MCF 10A (cell line): ENCODE measurements at regions of chrX and their contacts with region 1.

Region 1: GRCh38 chrX:131704136-131704695 is 160.3 kb downstream of the OR13H1 start:
- DNase-seq: peak; percentile 96
- H3K4me3 Mint-ChIP-seq: peak overlapping the region; percentile 77
- H3K27ac Mint-ChIP-seq: peak overlapping the region; percentile 20
- H3K4me1 Mint-ChIP-seq: no peaks in the 10 kb centered on the region
- H3K27me3 Mint-ChIP-seq: no peaks in the 10 kb centered on the region
- CTCF ChIP-seq: peak; percentile 87

Region 2: DNA sequence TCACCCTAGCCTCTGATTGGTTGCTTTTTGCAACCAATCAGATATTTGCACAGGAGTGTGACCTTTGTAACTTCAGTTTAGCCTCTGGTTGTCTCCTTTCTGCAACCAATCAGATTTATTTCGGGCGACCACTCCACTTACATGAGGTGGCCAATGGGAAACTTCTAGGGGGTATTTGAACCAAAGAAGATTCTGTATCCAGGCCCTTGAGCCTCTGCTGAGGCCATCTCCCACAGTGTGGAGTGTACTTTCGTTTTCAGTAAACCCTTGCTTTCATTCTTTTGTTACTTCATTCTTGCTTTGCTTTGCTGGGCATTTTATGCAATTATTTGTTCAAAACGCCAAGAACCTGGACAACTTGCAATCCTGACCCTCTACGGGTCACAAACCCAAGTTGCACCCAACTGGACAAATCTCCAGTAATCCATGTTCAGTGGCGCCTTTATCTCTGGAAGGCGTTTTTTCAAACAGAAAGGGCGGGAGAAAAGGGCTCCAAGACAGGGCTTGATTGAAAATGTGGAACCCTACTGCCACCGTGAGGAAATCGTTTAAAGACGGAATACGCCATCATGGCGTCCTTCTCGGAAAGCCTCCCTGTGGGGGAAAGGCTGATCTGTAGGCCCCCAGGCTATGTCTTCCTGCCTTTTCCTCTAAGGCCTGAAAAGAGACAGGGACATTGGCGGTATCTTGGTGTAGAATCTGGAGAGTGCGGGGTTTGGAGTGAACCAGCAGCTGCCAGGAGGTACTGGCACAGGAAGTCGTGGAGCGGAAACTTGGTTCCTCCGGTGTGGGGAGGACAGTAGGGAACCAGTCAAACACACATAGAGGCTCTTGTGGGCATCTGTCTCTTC is 24.3 kb after region 1 on chrX:
- CTCF ChIA-PET with region 1: interaction called, 3 read pairs
- POLR2A ChIA-PET with region 1: no interaction called
- intact Hi-C with region 1: loop called (anchors 1 kb)
- DNase-seq: peak; percentile 93
- H3K4me3 Mint-ChIP-seq: peak overlapping the region; percentile 85
- H3K27ac Mint-ChIP-seq: peak overlapping the region; percentile 98
- H3K4me1 Mint-ChIP-seq: no peaks in the 10 kb centered on the region
- H3K27me3 Mint-ChIP-seq: no peaks in the 10 kb centered on the region
- CTCF ChIP-seq: peak; percentile 52

Region 3: GRCh38 chrX:131746474-131746968 is 42.3 kb after region 1 on chrX:
- CTCF ChIA-PET with region 1: interaction called, 22 read pairs
- POLR2A ChIA-PET with region 1: interaction called, 16 read pairs
- intact Hi-C with region 1: no loop called
- DNase-seq: peak; percentile 95
- H3K4me3 Mint-ChIP-seq: peak overlapping the region; percentile 93
- H3K27ac Mint-ChIP-seq: peak overlapping the region; percentile 94
- H3K4me1 Mint-ChIP-seq: peaks cover 13% of the 10 kb centered on the region
- H3K27me3 Mint-ChIP-seq: no peaks in the 10 kb centered on the region
- CTCF ChIP-seq: peak; percentile 62

Region 4: GRCh38 chrX:131783555-131784308 is 79.5 kb after region 1 on chrX:
- CTCF ChIA-PET with region 1: interaction called, 6 read pairs
- POLR2A ChIA-PET with region 1: interaction called, 5 read pairs
- intact Hi-C with region 1: loop called (anchors 2 kb)
- DNase-seq: peak; percentile 94
- H3K4me3 Mint-ChIP-seq: peak overlapping the region; percentile 69
- H3K27ac Mint-ChIP-seq: peak overlapping the region; percentile 92
- H3K4me1 Mint-ChIP-seq: peaks cover 16% of the 10 kb centered on the region
- H3K27me3 Mint-ChIP-seq: peaks cover 18% of the 10 kb centered on the region
- CTCF ChIP-seq: peak; percentile 54

Region 5: GRCh38 chrX:131792789-131793462 is 88.7 kb after region 1 on chrX:
- CTCF ChIA-PET with region 1: interaction called, 6 read pairs
- POLR2A ChIA-PET with region 1: interaction called, 5 read pairs
- intact Hi-C with region 1: loop called (anchors 1 kb)
- DNase-seq: peak; percentile 94
- H3K4me3 Mint-ChIP-seq: peak overlapping the region; percentile 72
- H3K27ac Mint-ChIP-seq: peak overlapping the region; percentile 80
- H3K4me1 Mint-ChIP-seq: peaks cover 4% of the 10 kb centered on the region
- H3K27me3 Mint-ChIP-seq: peaks cover 37% of the 10 kb centered on the region
- CTCF ChIP-seq: peak; percentile 49